Activated naive CD4-positive, alpha-beta T cell treated with anti-CD3 and anti-CD28 coated beads for 36 hours (primary cell): ENCODE measurements at regions of chr3 and their contacts with region 1.

Region 1: DNA sequence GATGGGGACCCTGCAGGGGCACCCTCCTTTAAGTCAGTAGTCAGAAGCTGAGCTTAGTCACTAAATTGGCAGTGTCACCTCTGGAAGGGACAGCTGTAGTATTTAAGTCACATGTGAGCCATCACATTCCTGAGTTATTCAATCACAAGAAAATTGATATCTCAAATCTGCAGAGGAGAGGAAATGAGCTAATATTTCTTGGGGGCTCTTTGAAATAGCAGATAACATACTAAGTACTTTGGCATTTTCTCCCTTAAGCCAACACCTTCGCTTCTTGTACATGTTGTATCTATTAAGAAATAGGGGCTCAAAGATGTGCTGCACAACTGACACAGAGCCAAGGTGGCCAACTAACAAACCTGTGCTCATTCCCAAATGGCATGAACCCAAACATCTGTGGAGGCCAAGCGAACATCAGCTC is 63.1 kb downstream of the ABHD5 start:
- DNase-seq: no peak
- H3K4me3 Mint-ChIP-seq: no peak overlapping the region
- H3K27ac Mint-ChIP-seq: no peak overlapping the region
- H3K4me1 Mint-ChIP-seq: peaks cover 40% of the 10 kb centered on the region
- H3K27me3 Mint-ChIP-seq: no peaks in the 10 kb centered on the region

Region 2: GRCh38 chr3:43690400-43691119 is 63.2 kb before region 1 on chr3 and contains the start of gene ABHD5:
- CTCF ChIA-PET with region 1: no interaction called
- intact Hi-C with region 1: loop called (anchors 1 kb)
- DNase-seq: peak; percentile 85
- H3K4me3 Mint-ChIP-seq: peak within 1 kb of the TSS; percentile 83
- H3K27ac Mint-ChIP-seq: peak within 1 kb of the TSS; percentile 85
- H3K4me1 Mint-ChIP-seq: peaks cover 31% of the 10 kb centered on the region
- H3K27me3 Mint-ChIP-seq: no peaks in the 10 kb centered on the region
- total RNA-seq, gene ABHD5: 9.4 to 11.0 TPM

Region 3: GRCh38 chr3:43699864-43700263 is 53.9 kb before region 1 on chr3:
- CTCF ChIA-PET with region 1: no interaction called
- intact Hi-C with region 1: loop called (anchors 2 kb)
- DNase-seq: peak; percentile 37
- H3K4me3 Mint-ChIP-seq: no peak overlapping the region
- H3K27ac Mint-ChIP-seq: no peak overlapping the region
- H3K4me1 Mint-ChIP-seq: peaks cover 15% of the 10 kb centered on the region
- H3K27me3 Mint-ChIP-seq: no peaks in the 10 kb centered on the region